ENCODE measurements at regions of chr5 and their contacts with region 1.

Region 1: DNA sequence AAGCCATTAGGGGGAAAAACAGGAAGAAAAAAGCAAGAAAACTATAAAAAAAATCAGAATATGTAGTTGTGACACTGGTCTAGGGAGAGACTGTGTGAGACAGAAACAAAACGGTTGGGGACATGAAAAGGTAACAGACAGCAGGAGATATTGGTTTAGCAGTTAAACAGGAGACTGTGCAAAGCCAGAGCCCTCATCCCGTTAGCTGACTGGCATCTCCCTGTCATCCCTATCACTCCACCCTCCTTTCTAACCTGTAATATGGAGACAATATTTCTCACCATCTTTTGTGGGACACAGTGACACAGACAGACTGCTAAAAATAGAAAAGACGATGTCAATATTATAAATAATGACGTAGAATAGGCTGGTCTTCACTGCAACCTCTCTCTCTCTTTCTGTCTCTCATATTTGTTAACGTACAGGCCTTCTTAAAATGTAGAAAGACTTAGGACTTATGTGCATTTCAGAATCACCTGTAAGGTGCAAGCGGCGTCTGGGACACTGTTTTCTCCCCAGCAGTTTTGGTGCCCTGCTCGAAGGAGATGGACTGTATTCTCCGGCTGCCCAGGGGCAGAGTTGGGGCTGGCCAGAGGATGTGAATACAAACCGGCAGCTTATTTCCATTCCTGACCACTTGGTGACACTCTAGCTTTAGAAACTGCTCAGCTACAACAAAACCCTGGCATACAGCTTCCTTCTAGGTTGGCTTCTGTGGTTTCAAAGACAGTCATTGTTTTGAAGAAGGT is 190.6 kb downstream of the MAT2B start:
- DNase-seq: peak; percentile 40
- H3K4me3 ChIP-seq: no peak overlapping the region
- H3K27ac ChIP-seq: no peak overlapping the region
- H3K4me1 ChIP-seq: no peaks in the 10 kb centered on the region
- H3K27me3 ChIP-seq: peaks cover 58% of the 10 kb centered on the region
- CTCF ChIP-seq: peak; percentile 62

Region 2: GRCh38 chr5:162721125-162721524 is 974.9 kb before region 1 on chr5:
- CTCF ChIA-PET with region 1: no interaction called
- POLR2A ChIA-PET with region 1: no interaction called
- intact Hi-C with region 1: no loop called
- DNase-seq: no peak
- H3K4me3 ChIP-seq: no peak overlapping the region
- H3K27ac ChIP-seq: no peak overlapping the region
- H3K4me1 ChIP-seq: no peaks in the 10 kb centered on the region
- H3K27me3 ChIP-seq: no peaks in the 10 kb centered on the region
- CTCF ChIP-seq: no peak

Region 3: GRCh38 chr5:163760498-163760897 is 64.5 kb after region 1 on chr5:
- CTCF ChIA-PET with region 1: no interaction called
- POLR2A ChIA-PET with region 1: no interaction called
- intact Hi-C with region 1: no loop called
- DNase-seq: no peak
- H3K4me3 ChIP-seq: no peak overlapping the region
- H3K27ac ChIP-seq: no peak overlapping the region
- H3K4me1 ChIP-seq: no peaks in the 10 kb centered on the region
- H3K27me3 ChIP-seq: peaks cover 38% of the 10 kb centered on the region
- CTCF ChIP-seq: no peak

Region 4: GRCh38 chr5:164002628-164003027 is 306.6 kb after region 1 on chr5:
- CTCF ChIA-PET with region 1: no interaction called
- POLR2A ChIA-PET with region 1: no interaction called
- intact Hi-C with region 1: loop called (anchors 10 kb)
- DNase-seq: no peak
- H3K4me3 ChIP-seq: no peak overlapping the region
- H3K27ac ChIP-seq: no peak overlapping the region
- H3K4me1 ChIP-seq: no peaks in the 10 kb centered on the region
- H3K27me3 ChIP-seq: no peaks in the 10 kb centered on the region
- CTCF ChIP-seq: no peak

Region 5: GRCh38 chr5:164504141-164504772 is 808.3 kb after region 1 on chr5:
- CTCF ChIA-PET with region 1: no interaction called
- POLR2A ChIA-PET with region 1: no interaction called
- intact Hi-C with region 1: loop called (anchors 1 kb)
- DNase-seq: peak; percentile 44
- H3K4me3 ChIP-seq: no peak overlapping the region
- H3K27ac ChIP-seq: no peak overlapping the region
- H3K4me1 ChIP-seq: no peaks in the 10 kb centered on the region
- H3K27me3 ChIP-seq: peaks cover 15% of the 10 kb centered on the region
- CTCF ChIP-seq: peak; percentile 75

Measured in A673 (cell line).